SK-N-SH (cell line): ENCODE measurements at regions of chr11 and their contacts with region 1.

Region 1: DNA sequence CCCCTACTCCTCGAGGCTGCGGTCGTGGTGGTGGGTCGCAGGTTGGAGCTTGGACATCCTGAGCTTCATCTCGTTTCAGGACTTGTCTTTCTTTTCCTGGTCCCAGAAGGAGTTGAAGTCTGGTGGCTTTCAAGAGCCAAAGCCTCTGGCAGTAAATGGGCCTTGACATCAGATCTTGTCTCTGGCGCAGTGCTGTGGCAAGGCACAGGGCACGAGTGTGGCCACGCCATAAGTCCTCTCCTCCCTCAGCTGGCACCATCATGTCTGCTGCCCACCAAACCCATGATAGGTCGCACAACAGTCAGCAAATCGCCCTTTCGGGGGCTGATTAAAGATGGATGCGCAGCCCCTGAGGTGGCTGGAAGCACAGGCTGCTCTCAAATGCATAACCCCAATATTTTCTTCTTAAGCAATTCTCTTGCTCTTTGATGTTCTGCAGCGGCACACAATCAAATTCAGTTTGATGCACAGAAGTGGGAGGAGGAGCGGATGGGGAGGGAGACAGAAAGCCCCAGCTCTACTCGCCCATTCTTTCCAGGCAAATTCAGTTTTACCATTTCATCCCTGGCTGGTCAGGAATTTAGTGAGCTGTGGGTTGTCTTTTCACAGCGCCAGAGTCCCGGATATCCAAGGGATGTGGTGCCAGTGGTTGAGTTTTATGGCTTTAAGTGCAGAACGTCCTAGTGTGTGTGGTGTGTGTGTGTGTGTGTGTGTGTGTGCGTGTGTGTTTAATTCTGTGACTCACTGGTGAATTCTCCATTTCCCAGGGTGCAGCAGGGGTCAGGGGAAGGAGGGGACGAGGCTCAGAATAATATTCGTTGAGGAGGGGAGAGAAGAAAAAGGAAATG is 162.0 kb downstream of the DSCAML1 start:
- DNase-seq: no peak
- H3K4me3 ChIP-seq: no peak overlapping the region
- H3K27ac ChIP-seq: no peak overlapping the region
- H3K4me1 ChIP-seq: no peaks in the 10 kb centered on the region; a peak in 1 of 4 replicates
- H3K27me3 ChIP-seq: no peaks in the 10 kb centered on the region
- CTCF ChIP-seq: no peak
- EP300 ChIP-seq: no peak
- RAD21 ChIP-seq: no peak

Region 2: DNA sequence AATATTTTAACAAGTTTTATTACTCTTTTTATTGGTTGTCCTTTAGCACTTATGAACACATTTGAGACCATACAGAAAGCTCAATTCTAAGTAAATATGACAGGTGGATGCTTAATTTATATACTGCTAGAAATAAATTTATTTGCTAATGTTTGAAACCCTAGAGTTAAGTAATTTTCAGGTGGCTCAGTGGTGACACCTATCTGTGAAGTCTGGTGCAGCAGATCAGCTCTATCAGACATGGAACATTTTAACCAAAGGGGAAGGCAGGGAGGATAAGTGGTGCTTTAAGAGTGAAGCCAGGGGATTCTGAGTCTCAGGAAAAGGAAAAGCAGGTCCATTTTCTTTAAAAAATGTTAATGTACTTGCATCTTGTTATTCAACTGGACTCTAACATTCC is 13.8 kb before region 1 on chr11:
- CTCF ChIA-PET with region 1: interaction called, 22 read pairs
- POLR2A ChIA-PET with region 1: no interaction called
- DNase-seq: no peak
- H3K4me3 ChIP-seq: no peak overlapping the region
- H3K27ac ChIP-seq: no peak overlapping the region
- H3K4me1 ChIP-seq: peaks cover 0 to 8% of the 10 kb centered on the region in 2 experiments; a peak in 1 of 4 replicates
- H3K27me3 ChIP-seq: 0 out of 2 replicates have a peak, but pooled peaks cover 4% of the 10 kb centered on the region
- CTCF ChIP-seq: peak; percentile 57
- EP300 ChIP-seq: no peak
- RAD21 ChIP-seq: peak; percentile 18; the same call in 1 of the 2 replicates